ENCODE measurements at regions of chr5 and their contacts with region 1.

Region 1: DNA sequence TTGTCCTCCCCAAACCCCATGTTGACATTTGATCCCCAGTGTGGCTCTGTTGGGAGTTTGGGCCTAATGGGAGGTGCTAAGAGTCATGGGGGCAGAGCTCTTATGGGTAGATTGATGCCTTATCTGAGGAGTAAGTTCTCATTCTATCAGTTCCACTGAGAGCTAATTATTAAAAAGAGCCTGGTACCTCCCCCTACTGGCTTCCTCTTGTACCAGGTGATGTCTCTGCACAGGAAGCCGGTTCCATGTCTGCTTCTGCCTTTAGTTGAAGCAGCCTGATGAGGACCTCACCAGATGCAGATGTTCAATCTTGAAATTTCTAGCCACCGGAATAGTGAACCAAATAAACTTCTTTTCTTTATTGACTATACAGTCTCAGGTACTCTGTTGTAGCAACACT is 10.8 kb downstream of the GABRB2 start:
- DNase-seq: peak; percentile 24
- H3K4me3 Mint-ChIP-seq: no peak overlapping the region
- H3K27ac Mint-ChIP-seq: no peak overlapping the region
- H3K4me1 Mint-ChIP-seq: no peaks in the 10 kb centered on the region
- H3K27me3 Mint-ChIP-seq: peaks cover 72% of the 10 kb centered on the region
- CTCF ChIP-seq: peak; percentile 28

Region 2: DNA sequence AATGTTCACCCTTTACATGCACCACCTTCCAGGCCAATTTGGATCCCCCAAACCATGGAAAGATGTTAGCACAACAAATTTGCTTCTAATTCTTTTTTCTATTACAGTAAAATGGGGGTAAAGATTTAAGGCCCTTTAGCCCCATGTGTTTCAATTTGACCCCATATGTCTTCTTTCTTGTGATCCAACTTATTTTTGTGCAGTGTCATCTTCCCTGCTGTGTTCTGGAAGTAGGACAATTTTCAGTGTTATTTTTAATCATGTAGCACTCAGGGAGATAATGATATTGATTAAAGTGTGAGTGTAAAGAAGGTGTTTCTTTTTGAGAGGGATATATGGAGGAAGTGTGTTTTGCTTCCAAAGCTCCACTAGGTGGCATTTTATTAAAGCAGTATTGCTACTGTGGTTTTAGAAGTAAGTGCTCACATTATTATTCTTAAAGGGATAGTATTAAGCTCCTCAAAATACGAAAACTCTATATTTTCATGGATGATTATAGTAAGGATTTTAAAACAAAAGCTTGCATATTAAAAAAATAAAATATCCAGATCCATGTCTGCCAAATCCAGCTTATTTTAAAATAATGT is 565.1 kb before region 1 on chr5:
- CTCF ChIA-PET with region 1: interaction called, 3 read pairs
- POLR2A ChIA-PET with region 1: no interaction called
- intact Hi-C with region 1: loop called (anchors 2 kb)
- DNase-seq: peak; percentile 18
- H3K4me3 Mint-ChIP-seq: no peak overlapping the region
- H3K27ac Mint-ChIP-seq: no peak overlapping the region
- H3K4me1 Mint-ChIP-seq: peaks cover 14% of the 10 kb centered on the region
- H3K27me3 Mint-ChIP-seq: no peaks in the 10 kb centered on the region
- CTCF ChIP-seq: peak; percentile 27

Region 3: GRCh38 chr5:161460741-161461140 is 75.0 kb before region 1 on chr5:
- CTCF ChIA-PET with region 1: no interaction called
- POLR2A ChIA-PET with region 1: no interaction called
- intact Hi-C with region 1: no loop called
- DNase-seq: no peak
- H3K4me3 Mint-ChIP-seq: no peak overlapping the region
- H3K27ac Mint-ChIP-seq: no peak overlapping the region
- H3K4me1 Mint-ChIP-seq: no peaks in the 10 kb centered on the region
- H3K27me3 Mint-ChIP-seq: peaks cover 11% of the 10 kb centered on the region
- CTCF ChIP-seq: no peak